Dorsolateral prefrontal cortex (tissue), 120 donors: ENCODE measurements at regions of chr6 and their contacts with region 1.

Region 1: DNA sequence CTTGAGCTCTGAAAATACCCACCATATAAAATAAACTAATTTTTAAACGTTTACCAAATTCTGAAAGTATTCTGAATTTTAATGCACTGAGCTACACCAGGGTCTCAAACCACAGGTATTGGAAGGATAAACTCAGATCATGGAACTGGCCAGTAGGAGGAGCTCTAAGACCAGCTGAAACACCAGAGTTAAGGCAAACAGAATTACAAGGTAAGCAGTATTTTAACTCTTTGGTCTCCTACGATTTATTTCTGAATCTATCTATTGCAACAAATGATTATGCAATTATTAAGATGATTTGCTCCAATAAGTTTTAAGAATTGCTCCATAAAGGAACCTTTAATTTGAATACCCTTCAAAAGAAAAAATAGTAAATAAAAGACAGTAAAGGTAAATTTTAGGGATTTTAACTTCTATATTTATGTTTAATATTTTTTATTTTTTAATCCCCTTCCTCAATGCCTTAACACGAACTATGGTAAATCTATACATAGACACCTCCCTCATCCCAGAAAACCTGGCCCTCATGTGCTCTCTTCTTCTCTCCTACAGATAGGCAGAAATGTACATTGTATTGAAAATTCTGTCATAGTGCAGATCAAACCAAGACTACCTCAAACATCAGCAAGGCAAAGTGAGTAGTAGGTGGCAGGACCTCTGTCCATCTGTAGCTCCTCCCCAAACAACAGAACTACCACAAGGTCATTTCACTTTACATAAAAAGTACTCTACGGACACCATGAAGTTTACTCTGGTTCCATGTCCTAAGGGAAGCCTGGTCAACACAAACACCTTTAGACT is 58.4 kb downstream of the SMLR1 start:
- DNase-seq: peak in 4 of 10 donors; percentile 59 to 91 (median 72)
- H3K4me3 ChIP-seq: peak overlapping the region in 1 of 59 donors; percentile 4
- H3K27ac ChIP-seq: peak overlapping the region in 46 of 59 donors; percentile 1 to 95 (median 38)
- H3K27me3 ChIP-seq: no peaks in the 10 kb centered on the region
- CTCF ChIP-seq: peak; percentile 81 to 99 (median 95)

Region 2: DNA sequence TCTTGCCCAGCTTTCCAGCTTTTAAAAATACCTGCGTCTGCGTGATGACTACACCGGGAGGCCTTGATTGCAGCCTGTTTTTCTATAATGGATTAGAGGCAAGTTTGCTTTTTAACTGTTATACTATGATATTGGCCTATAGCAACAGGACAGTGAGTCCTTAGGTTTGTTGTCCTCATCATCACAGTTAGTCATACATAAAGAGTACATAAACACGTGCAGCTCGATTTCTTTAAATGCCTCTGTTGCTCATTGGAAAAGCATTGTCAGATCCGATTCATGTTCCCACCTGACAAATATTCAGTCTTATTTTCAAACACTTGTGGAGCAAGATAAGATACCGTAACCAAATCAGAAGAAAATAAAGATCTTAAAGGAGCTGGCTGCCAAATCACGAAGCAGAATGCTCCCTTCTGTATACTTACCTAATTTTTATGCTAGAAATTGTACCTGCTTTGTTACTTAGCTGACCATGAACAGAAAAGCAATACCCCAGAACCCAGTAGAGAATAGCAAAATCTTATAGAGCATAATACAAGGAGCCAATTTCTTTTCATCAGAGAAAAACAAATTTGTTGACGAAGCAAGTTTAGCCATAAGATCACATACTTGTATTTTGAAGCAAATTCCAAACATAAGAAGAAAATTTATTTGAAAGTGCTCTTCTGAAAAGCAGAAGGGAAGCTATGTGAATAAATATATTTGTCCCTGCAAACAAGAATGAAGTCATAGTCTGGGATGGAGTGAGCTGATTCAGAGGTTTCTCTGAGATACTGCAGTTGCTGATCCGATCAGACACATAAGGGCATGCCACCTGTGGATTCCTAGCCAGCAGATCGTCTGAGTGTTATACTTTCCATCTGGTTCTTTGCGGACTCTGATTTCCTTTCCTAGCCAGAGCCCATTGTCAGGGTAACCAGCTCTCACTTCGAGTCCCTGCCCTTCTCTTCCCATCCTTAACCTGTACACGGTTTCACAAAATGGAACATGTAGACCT is 419.2 kb before region 1 on chr6:
- intact Hi-C with region 1: no loop called
- DNase-seq: no peak
- H3K4me3 ChIP-seq: no peak overlapping the region
- H3K27ac ChIP-seq: no peak overlapping the region
- H3K27me3 ChIP-seq: peaks cover 0 to 2% (median 0%) of the 10 kb centered on the region in 45 donors
- CTCF ChIP-seq: no peak

Region 3: GRCh38 chr6:130945401-130945919 is 59.9 kb after region 1 on chr6:
- intact Hi-C with region 1: loop called in 1 of 2 experiments (anchors 10 kb)
- DNase-seq: no peak
- H3K4me3 ChIP-seq: peak overlapping the region in 4 of 59 donors; percentile 0 to 9 (median 6)
- H3K27ac ChIP-seq: peak overlapping the region in 56 of 59 donors; percentile 29 to 94 (median 84)
- H3K27me3 ChIP-seq: no peaks in the 10 kb centered on the region
- CTCF ChIP-seq: no peak

Region 4: DNA sequence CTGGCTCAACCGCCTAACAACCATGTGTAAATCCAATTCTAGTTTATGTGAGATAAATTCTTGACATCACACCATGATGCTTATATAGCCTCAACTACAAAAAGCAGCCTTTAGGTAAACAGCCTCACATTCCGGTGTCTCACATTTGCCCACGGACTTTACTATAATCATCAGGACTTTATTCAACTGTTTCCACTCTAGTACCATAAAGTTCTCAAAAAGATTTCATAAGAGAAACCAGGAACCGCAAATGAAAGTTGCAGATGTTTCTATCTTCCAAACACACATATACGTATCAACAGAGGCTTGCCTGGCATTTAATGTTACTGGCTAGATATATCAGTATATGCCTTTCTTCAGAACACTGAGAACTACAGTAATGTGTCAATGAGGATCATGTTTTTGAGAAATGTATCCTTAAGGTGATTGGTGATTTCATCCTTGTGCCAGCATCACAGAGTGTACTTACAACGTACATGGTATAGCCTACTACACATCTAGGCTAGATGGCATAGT is 97.4 kb after region 1 on chr6:
- intact Hi-C with region 1: no loop called
- DNase-seq: no peak
- H3K4me3 ChIP-seq: no peak overlapping the region
- H3K27ac ChIP-seq: no peak overlapping the region
- H3K27me3 ChIP-seq: no peaks in the 10 kb centered on the region
- CTCF ChIP-seq: no peak

Region 5: DNA sequence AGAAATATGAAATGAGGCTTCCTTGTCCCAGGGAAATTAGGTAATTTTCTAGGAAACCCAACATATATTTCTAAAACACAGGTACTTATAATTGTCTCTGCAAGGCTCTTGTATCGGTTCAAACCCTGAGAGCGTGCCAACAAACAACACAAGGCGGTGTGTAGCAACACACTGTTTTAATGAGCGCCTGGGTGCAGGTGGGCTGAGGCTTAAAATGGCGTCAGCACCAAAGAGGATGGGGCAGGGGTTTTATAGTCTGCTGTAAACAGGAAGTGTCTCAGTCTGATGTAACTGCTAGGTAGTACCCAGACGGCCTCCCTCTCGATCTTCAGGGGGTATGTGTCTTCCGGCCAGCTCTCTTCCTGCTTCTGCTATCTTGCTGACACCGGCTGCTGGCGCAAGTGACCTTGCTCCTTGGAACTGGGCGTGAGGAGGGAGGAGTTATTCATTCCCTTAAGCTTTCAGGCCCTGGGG is 107.7 kb after region 1 on chr6:
- intact Hi-C with region 1: no loop called
- DNase-seq: no peak
- H3K4me3 ChIP-seq: no peak overlapping the region
- H3K27ac ChIP-seq: no peak overlapping the region
- H3K27me3 ChIP-seq: no peaks in the 10 kb centered on the region
- CTCF ChIP-seq: no peak

Region 6: DNA sequence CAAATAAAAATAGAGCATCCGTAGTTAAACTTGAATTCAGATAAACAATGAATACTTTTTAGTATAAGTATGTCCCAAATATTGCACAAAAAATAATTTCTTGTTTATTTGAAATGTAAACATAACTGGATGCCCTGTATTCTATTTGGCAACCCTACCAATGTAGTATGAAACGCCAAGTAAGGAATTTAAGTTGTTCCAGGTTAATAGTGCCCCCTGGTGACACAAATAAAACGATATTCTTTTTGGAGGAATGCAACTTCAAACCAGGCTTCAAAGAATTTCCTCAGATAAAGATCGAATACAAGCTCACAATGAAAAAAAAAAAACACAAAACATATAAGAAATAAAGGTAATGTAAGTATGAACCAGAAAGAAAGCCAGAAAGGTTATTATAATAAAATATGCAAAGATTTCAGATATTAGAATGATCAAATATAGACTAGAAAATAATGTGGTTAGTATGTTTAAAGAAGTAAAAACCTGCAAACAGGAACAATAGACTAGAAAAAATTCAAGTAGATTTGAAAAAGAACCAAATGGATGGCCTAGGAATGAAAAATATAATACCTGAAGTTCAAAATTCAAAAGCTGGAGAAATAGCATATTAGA is 231.3 kb after region 1 on chr6:
- intact Hi-C with region 1: loop called (anchors 2 to 5 kb)
- DNase-seq: no peak
- H3K4me3 ChIP-seq: no peak overlapping the region
- H3K27ac ChIP-seq: no peak overlapping the region
- H3K27me3 ChIP-seq: no peaks in the 10 kb centered on the region
- CTCF ChIP-seq: peak; percentile 18 to 84 (median 64)

Region 7: GRCh38 chr6:131167773-131168172 is 282.2 kb after region 1 on chr6:
- intact Hi-C with region 1: loop called (anchors 1 to 2 kb)
- DNase-seq: no peak
- H3K4me3 ChIP-seq: no peak overlapping the region
- H3K27ac ChIP-seq: no peak overlapping the region
- H3K27me3 ChIP-seq: no peaks in the 10 kb centered on the region
- CTCF ChIP-seq: peak in 51 of 56 donors; percentile 22 to 76 (median 52)

Region 8: DNA sequence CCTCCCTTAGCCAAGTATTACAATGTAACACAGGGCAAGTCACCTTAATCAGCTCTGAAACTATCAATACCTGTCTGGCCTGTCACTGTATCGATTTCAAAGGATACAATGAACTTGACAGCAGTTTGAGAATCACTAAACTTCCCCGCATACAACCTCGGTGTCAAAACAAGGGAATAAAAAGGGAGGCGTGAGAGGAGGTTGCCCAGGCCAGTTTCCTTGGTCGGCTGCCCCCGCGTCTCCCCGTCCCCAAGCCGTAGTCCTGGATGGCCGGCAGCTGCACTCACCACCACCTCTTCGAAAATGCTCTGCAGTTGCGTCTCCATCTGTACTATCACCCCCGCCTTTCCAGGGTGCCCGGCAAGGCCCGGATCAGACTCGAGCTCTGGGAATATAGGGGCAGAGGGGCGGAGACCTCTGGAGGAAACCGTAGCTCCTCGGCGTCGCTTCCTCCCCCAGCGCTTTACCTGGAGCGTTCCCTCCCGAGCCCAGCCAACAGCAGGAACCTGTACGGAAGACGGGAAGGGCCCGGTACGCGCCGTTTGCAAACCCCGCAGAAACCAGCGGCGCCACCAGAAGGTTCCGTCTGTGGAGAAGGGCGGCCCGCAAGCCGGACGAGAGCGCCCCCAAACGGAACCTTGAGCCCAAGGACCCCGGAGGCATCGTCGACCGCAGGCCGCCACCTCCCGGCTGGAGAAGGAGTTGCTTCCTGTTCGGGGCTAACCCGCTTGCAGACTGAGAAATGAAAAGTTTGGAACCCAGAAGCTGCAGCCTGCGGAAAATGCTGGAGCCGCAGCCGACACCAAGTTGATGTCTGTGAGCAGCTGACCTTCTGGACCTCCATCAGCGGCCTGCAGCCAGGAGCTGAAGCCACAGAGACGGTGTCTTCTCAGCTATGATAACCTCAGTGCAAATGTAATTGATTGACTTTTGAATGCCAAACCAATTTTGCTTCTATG is 742.4 kb after region 1 on chr6 and contains the start of gene MED23:
- intact Hi-C with region 1: loop called in 1 of 2 experiments (anchors 10 kb)
- DNase-seq: peak; percentile 88 to 97 (median 94)
- H3K4me3 ChIP-seq: peak within 1 kb of the TSS; percentile 60 to 98 (median 83)
- H3K27ac ChIP-seq: peak within 1 kb of the TSS in 56 of 59 donors; percentile 7 to 91 (median 68)
- H3K27me3 ChIP-seq: no peaks in the 10 kb centered on the region
- CTCF ChIP-seq: peak; percentile 89 to 100 (median 99)
- total RNA-seq, gene MED23: 28.0 to 46.3 (median 36.8) TPM